HepG2 (cell line): ENCODE measurements at regions of chr7 and their contacts with region 1.

Region 1: DNA sequence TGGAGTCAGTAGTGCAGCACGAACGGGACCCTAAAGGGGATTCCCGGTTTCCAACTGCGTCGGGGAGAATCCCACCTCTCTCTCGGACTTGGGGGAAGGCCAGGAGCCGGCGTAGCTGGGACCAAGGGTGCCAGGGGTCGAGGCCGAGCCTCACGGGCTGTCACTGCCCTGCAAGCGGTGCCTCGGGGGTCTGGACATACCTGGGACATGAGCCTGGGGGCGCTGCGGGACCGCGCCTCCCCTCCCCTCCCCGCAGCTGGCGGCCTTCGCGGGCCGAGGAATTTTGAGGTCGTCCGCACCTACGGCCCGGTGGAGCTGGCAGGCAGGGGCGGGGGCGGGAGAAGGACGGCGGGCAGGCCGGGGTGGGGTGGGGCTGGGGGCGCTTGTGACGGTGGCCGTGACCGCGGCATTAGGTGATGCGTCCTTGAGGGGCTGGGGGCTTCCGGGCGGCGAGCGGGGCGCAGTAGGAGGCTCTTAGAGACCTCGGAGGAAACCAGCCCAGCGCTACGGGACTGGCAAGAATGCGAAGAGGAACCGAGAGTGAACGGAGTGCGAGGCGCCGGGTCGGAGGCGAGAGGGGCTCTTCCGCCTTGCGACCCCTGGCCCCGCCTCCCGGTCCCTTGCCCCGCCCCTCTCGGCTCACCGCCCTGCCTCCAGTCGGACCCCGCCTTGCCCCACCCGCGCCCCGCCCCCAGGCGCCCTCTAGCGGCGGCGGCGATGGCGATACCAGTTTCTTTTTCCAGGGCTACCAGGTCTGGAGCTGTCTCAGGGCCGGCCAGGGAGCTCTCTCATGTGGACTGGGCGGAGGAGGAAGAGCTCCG is 48.3 kb downstream of the NPVF start:
- DNase-seq: peak; percentile 69
- ATAC-seq: peak; percentile 97
- H3K4me3 ChIP-seq: peak overlapping the region; percentile 64 to 93 (median 73)
- H3K27ac ChIP-seq: peak overlapping the region; percentile 69
- H3K4me1 ChIP-seq: peaks cover 18% of the 10 kb centered on the region
- H3K27me3 ChIP-seq: peaks cover 0 to 3% of the 10 kb centered on the region in 2 experiments; a peak in 1 of 5 replicates
- CTCF ChIP-seq: peak; percentile 86
- EP300 ChIP-seq: no peak
- POLR2A ChIP-seq: peak; percentile 69 to 92
- RAD21 ChIP-seq: 0 out of 2 replicates have a peak, but pooled peaks have one; percentile 12

Region 2: GRCh38 chr7:24036042-24036412 is 1144.0 kb before region 1 on chr7:
- CTCF ChIA-PET with region 1: no interaction called
- POLR2A ChIA-PET with region 1: no interaction called
- in situ Hi-C with region 1: no loop called
- intact Hi-C with region 1: no loop called
- DNase-seq: no peak
- ATAC-seq: no peak
- H3K4me3 ChIP-seq: no peak overlapping the region; a peak in 1 of 6 replicates
- H3K27ac ChIP-seq: no peak overlapping the region
- H3K4me1 ChIP-seq: no peaks in the 10 kb centered on the region
- H3K27me3 ChIP-seq: no peaks in the 10 kb centered on the region
- CTCF ChIP-seq: no peak
- EP300 ChIP-seq: no peak
- POLR2A ChIP-seq: no peak
- RAD21 ChIP-seq: no peak

Region 3: DNA sequence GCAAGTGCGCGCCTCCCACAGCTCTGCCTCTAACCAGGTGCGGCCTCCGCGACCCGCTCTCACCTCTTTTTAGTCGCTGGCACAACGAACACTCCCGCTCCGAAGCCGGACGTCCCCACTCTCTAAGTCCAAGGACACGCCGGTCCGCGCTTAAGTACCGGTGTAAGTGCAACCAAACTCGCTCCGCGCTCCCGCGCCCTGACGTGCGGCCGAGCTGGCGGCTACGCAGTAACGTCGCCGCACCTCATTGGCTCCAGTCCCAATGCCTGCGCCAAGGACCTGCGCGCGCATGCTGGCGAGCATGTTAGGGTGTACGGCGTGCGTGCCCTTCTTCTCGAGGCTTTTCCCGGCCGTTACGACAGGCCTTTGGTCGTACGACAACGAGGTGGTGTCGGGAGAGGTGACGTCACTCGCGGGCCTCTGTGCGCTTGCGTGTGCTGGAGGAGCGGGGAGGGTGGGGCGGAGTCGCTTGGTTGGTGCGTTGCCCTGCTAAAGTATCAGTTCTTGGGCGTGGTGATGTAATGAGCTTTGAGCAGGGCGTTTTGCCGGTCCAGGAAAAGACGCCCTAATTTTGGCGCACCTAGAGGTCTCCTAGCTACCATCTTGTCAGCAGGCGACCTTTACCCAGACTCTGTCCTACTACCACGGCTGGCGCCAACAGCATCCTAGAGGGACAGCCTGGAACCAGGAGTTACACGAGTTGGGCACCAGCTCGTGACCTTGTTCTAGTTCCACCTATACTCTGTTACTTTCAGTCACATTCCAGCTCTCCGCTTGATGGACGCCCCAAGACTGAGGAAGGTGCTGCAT is 54.6 kb before region 1 on chr7 and contains the start of gene CYCS:
- CTCF ChIA-PET with region 1: no interaction called
- POLR2A ChIA-PET with region 1: interaction called, 11 read pairs
- in situ Hi-C with region 1: no loop called
- intact Hi-C with region 1: no loop called
- DNase-seq: peak; percentile 98
- ATAC-seq: peak; percentile 96
- H3K4me3 ChIP-seq: peak within 1 kb of the TSS; percentile 83 to 87 (median 85)
- H3K27ac ChIP-seq: peak within 1 kb of the TSS; percentile 81
- H3K4me1 ChIP-seq: peaks cover 15% of the 10 kb centered on the region
- H3K27me3 ChIP-seq: no peaks in the 10 kb centered on the region; a peak in 2 of 5 replicates
- CTCF ChIP-seq: no peak
- EP300 ChIP-seq: peak; percentile 25 to 56; a peak in 2 of 4 replicates
- POLR2A ChIP-seq: peak; percentile 99
- RAD21 ChIP-seq: peak; percentile 27
- total RNA-seq, gene CYCS: 202 and 328 TPM in 2 replicates

Region 4: DNA sequence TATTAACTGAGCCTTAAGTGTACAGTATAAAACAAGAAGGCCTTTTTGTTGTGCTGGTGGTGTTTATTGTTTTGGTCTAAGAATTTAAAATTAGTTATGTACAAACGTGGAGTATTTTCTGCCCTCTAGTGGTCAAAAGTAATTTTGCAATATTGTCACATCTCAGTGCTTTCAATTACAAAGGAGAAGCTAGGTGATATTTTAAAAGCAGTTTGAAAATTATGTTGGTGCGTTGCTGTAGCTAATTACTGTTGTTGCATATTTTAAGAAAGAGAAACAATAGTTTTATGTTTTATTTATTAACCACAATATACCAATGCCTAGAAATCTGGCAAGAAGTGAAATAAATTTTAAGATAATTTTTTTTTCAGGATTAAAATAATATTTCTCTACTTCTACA is 36.9 kb after region 1 on chr7:
- CTCF ChIA-PET with region 1: interaction called, 6 read pairs
- POLR2A ChIA-PET with region 1: no interaction called
- in situ Hi-C with region 1: no loop called
- intact Hi-C with region 1: loop called (anchors 1 kb)
- DNase-seq: peak; percentile 39
- ATAC-seq: no peak
- H3K4me3 ChIP-seq: no peak overlapping the region
- H3K27ac ChIP-seq: no peak overlapping the region
- H3K4me1 ChIP-seq: no peaks in the 10 kb centered on the region
- H3K27me3 ChIP-seq: peaks cover 0 to 19% of the 10 kb centered on the region in 2 experiments; a peak in 3 of 5 replicates
- CTCF ChIP-seq: peak; percentile 58
- EP300 ChIP-seq: no peak
- POLR2A ChIP-seq: no peak
- RAD21 ChIP-seq: no peak

Region 5: DNA sequence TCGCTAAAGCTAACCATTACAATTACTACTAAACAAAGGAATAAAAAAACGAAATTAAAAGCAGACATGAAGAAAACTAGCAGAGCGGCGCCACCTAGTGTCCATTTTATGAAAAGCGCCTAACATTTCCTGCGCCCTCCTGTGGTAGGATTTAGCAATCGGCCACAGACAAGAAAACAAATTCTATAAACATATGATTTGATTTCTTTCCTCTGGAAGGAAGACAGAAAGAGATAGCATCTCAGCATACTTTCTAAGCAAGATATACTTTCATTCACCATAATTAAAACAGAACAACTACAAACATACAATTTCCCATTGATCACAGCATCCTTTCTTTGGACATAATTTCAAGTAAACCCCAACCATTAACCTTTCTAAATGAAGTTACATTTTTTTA is 386.0 kb after region 1 on chr7:
- CTCF ChIA-PET with region 1: no interaction called
- POLR2A ChIA-PET with region 1: no interaction called
- in situ Hi-C with region 1: no loop called
- intact Hi-C with region 1: loop called (anchors 10 kb)
- DNase-seq: peak; percentile 50
- ATAC-seq: no peak
- H3K4me3 ChIP-seq: no peak overlapping the region
- H3K27ac ChIP-seq: no peak overlapping the region
- H3K4me1 ChIP-seq: peaks cover 9% of the 10 kb centered on the region
- H3K27me3 ChIP-seq: peaks cover 2 to 11% of the 10 kb centered on the region in 2 experiments; a peak in 3 of 5 replicates
- CTCF ChIP-seq: peak; percentile 90
- EP300 ChIP-seq: no peak
- POLR2A ChIP-seq: no peak
- RAD21 ChIP-seq: peak; percentile 74